ENCODE measurements at regions of chr3 and their contacts with region 1.

Region 1: GRCh38 chr3:112561731-112562688 is at the starts of genes ATG3 and SLC35A5:
- DNase-seq: peak; percentile 99
- H3K4me3 Mint-ChIP-seq: peak within 1 kb of the TSS; percentile 90
- H3K27ac Mint-ChIP-seq: peak within 1 kb of the TSS; percentile 98
- H3K4me1 Mint-ChIP-seq: peaks cover 29% of the 10 kb centered on the region
- H3K27me3 Mint-ChIP-seq: no peaks in the 10 kb centered on the region
- total RNA-seq, gene ATG3: 49.2 to 50.4 TPM
- total RNA-seq, gene SLC35A5: 15.7 to 16.0 TPM

Region 2: GRCh38 chr3:111978493-111979433 is 583.2 kb before region 1 on chr3 and contains the start of gene ABHD10:
- CTCF ChIA-PET with region 1: no interaction called
- intact Hi-C with region 1: loop called (anchors 5 kb)
- DNase-seq: peak; percentile 98
- H3K4me3 Mint-ChIP-seq: peak within 1 kb of the TSS; percentile 87
- H3K27ac Mint-ChIP-seq: peak within 1 kb of the TSS; percentile 89
- H3K4me1 Mint-ChIP-seq: peaks cover 38% of the 10 kb centered on the region
- H3K27me3 Mint-ChIP-seq: no peaks in the 10 kb centered on the region
- total RNA-seq, gene ABHD10: 53.1 to 54.6 TPM

Region 3: DNA sequence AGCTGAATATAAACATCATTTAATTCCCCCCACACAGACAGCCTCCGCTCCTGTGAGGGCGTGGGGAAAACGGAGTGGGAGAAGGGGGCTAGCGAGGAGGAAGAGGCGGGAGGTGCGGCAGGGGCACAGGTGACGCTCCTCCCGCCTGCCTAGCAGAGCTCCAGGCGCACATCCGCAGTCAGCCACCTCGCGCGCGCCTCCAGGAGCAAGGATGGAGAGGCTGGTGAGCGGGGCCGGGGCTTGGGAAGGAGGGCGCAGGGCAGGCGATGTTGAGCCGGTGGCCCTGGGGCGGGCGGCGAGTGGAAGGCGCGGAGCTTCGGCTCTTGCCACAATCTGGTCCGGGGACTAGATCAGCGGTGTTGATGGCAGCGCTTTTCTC is 229.0 kb before region 1 on chr3 and contains the start of gene CD200:
- CTCF ChIA-PET with region 1: interaction called, 5 read pairs
- intact Hi-C with region 1: loop called (anchors 1 kb)
- DNase-seq: peak; percentile 75
- H3K4me3 Mint-ChIP-seq: peak within 1 kb of the TSS; percentile 94
- H3K27ac Mint-ChIP-seq: peak within 1 kb of the TSS; percentile 99
- H3K4me1 Mint-ChIP-seq: peaks cover 39% of the 10 kb centered on the region
- H3K27me3 Mint-ChIP-seq: no peaks in the 10 kb centered on the region
- total RNA-seq, gene CD200: 50.0 to 53.6 TPM

Region 4: DNA sequence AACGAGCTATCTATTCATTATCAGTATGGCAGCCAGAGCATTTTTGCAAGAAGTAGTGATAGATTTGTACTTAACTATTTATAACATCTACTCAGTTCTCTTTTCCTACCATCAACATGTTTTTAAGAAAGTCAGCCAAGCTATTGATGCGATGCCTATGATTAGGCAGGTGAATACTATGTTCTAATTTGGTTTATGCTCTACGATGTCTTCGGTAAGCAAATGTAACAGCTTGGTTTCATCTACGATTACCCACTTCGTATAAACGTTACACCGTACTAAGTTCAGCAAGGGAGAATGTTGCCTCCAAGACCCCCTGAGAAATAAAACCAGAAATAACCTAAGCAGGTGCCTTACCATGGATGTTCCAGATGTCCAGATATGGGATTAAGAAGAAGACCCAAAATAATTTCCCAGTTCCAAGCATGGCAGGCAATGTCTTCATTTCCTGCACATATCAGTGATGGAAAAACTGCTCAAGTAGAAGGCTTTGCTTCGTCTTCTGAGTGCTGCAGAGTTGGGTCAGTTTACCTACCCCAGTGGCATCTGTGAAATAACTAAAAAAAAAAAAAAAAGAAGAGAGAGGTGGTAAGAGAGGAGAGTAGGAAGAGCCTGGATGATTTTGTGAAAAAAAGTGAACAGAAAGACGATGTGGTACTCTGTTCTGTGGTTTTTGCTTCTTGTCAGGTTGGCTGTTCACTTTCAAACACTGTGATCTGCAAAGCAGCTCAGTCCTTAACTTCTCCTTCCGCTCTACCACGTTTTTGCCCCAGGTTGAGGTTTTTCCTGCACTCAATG is 62.9 kb before region 1 on chr3 and contains the start of gene BTLA:
- CTCF ChIA-PET with region 1: no interaction called
- intact Hi-C with region 1: loop called (anchors 1 kb)
- DNase-seq: peak; percentile 71
- H3K4me3 Mint-ChIP-seq: peak within 1 kb of the TSS; percentile 100
- H3K27ac Mint-ChIP-seq: peak within 1 kb of the TSS; percentile 100
- H3K4me1 Mint-ChIP-seq: peaks cover 51% of the 10 kb centered on the region
- H3K27me3 Mint-ChIP-seq: no peaks in the 10 kb centered on the region
- total RNA-seq, gene BTLA: 70.6 to 73.4 TPM

Region 5: GRCh38 chr3:112629425-112629824 is 67.4 kb after region 1 on chr3:
- CTCF ChIA-PET with region 1: no interaction called
- intact Hi-C with region 1: no loop called
- DNase-seq: peak; percentile 52
- H3K4me3 Mint-ChIP-seq: no peak overlapping the region
- H3K27ac Mint-ChIP-seq: no peak overlapping the region
- H3K4me1 Mint-ChIP-seq: peaks cover 6% of the 10 kb centered on the region
- H3K27me3 Mint-ChIP-seq: peaks cover 3% of the 10 kb centered on the region

Region 6: GRCh38 chr3:112676659-112677234 is 114.7 kb after region 1 on chr3:
- CTCF ChIA-PET with region 1: no interaction called
- intact Hi-C with region 1: loop called (anchors 1 kb)
- DNase-seq: peak; percentile 97
- H3K4me3 Mint-ChIP-seq: peak overlapping the region; percentile 14
- H3K27ac Mint-ChIP-seq: peak overlapping the region; percentile 54
- H3K4me1 Mint-ChIP-seq: peaks cover 42% of the 10 kb centered on the region
- H3K27me3 Mint-ChIP-seq: peaks cover 14% of the 10 kb centered on the region

Region 7: DNA sequence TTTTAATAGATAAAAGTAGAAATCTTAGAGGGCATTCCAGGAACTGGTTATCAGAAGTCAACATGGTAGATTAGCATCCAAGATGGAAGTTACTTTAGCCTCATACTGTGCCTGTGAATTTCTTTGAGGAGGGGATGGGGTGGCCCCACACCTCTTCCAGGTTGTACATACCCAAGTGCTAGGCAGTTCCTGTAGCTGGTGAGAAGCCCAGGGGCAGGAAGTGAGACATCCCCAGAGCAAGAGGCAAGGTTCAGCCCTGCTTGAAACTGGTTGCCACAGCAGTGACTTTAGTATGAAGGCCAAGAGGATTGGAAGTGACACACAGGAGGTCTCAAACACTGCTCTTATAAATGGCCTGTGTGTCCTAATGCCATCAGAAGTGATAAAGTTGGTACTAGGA is 440.7 kb after region 1 on chr3:
- CTCF ChIA-PET with region 1: no interaction called
- intact Hi-C with region 1: loop called (anchors 1 kb)
- DNase-seq: peak; percentile 90
- H3K4me3 Mint-ChIP-seq: peak overlapping the region; percentile 42
- H3K27ac Mint-ChIP-seq: peak overlapping the region; percentile 95
- H3K4me1 Mint-ChIP-seq: peaks cover 86% of the 10 kb centered on the region
- H3K27me3 Mint-ChIP-seq: no peaks in the 10 kb centered on the region

Region 8: GRCh38 chr3:113696658-113697499 is 1134.9 kb after region 1 on chr3:
- CTCF ChIA-PET with region 1: no interaction called
- intact Hi-C with region 1: loop called (anchors 1 kb)
- DNase-seq: peak; percentile 99
- H3K4me3 Mint-ChIP-seq: no peak overlapping the region
- H3K27ac Mint-ChIP-seq: no peak overlapping the region
- H3K4me1 Mint-ChIP-seq: peaks cover 25% of the 10 kb centered on the region
- H3K27me3 Mint-ChIP-seq: no peaks in the 10 kb centered on the region